Activated CD4-positive, alpha-beta memory T cell treated with anti-CD3 and anti-CD28 coated beads for 36 hours (primary cell): ENCODE measurements at regions of chr16 and their contacts with region 1.

Region 1: GRCh38 chr16:23678430-23679273 is at the start of gene PLK1:
- DNase-seq: peak; percentile 92
- H3K4me3 Mint-ChIP-seq: peak within 1 kb of the TSS; percentile 92
- H3K27ac Mint-ChIP-seq: peak within 1 kb of the TSS; percentile 33
- H3K4me1 Mint-ChIP-seq: peaks cover 13% of the 10 kb centered on the region
- H3K27me3 Mint-ChIP-seq: no peaks in the 10 kb centered on the region
- total RNA-seq, gene PLK1: 81.2 to 81.6 TPM

Region 2: GRCh38 chr16:23640931-23641765 is 37.5 kb before region 1 on chr16 and contains the starts of genes DCTN5 and PALB2:
- CTCF ChIA-PET with region 1: no interaction called
- POLR2A ChIA-PET with region 1: interaction called, 9 read pairs
- intact Hi-C with region 1: loop called (anchors 2 kb)
- DNase-seq: peak; percentile 94
- H3K4me3 Mint-ChIP-seq: peak within 1 kb of the TSS; percentile 99
- H3K27ac Mint-ChIP-seq: peak within 1 kb of the TSS; percentile 94
- H3K4me1 Mint-ChIP-seq: peaks cover 27% of the 10 kb centered on the region
- H3K27me3 Mint-ChIP-seq: no peaks in the 10 kb centered on the region
- total RNA-seq, gene DCTN5: 55.6 to 56.1 TPM
- total RNA-seq, gene PALB2: 20.3 to 20.8 TPM